ENCODE measurements at regions of chr18 and their contacts with region 1.

Region 1: GRCh38 chr18:49510393-49511115 is 23.5 kb upstream of the C18orf32 start:
- DNase-seq: peak; percentile 29 to 56
- ATAC-seq: peak in 2 of 4 donors; percentile 76 to 79
- H3K4me3 ChIP-seq: no peak overlapping the region
- H3K27ac ChIP-seq: no peak overlapping the region
- H3K4me1 ChIP-seq: no peaks in the 10 kb centered on the region
- H3K27me3 ChIP-seq: no peaks in the 10 kb centered on the region
- CTCF ChIP-seq: peak; percentile 76

Region 2: GRCh38 chr18:49858309-49859020 is 347.9 kb after region 1 on chr18:
- intact Hi-C with region 1: loop called (anchors 1 to 5 kb)
- DNase-seq: peak; percentile 52 to 73
- ATAC-seq: peak; percentile 69 to 77 (median 74)
- H3K4me3 ChIP-seq: no peak overlapping the region
- H3K27ac ChIP-seq: no peak overlapping the region
- H3K4me1 ChIP-seq: no peaks in the 10 kb centered on the region
- H3K27me3 ChIP-seq: no peaks in the 10 kb centered on the region
- CTCF ChIP-seq: peak; percentile 93

Measured in psoas muscle (tissue), 8 donors.